B cell (primary cell): ENCODE measurements at regions of chr11 and their contacts with region 1.

Region 1: GRCh38 chr11:60913793-60914632 is at the start of gene TMEM109:
- DNase-seq: peak; percentile 95
- ATAC-seq: peak; percentile 56
- H3K4me3 ChIP-seq: peak within 1 kb of the TSS; percentile 61 to 100 (median 90)
- H3K4me3 Mint-ChIP-seq: peak within 1 kb of the TSS; percentile 97
- H3K27ac ChIP-seq: peak within 1 kb of the TSS; percentile 87 to 96
- H3K27ac Mint-ChIP-seq: peak within 1 kb of the TSS; percentile 98
- H3K4me1 ChIP-seq: peaks cover 68 to 87% of the 10 kb centered on the region in 2 donors
- H3K4me1 Mint-ChIP-seq: peaks cover 77% of the 10 kb centered on the region
- H3K27me3 ChIP-seq: no peaks in the 10 kb centered on the region
- H3K27me3 Mint-ChIP-seq: no peaks in the 10 kb centered on the region
- CTCF ChIP-seq: no peak
- total RNA-seq, gene TMEM109: 81.7 and 99.4 TPM in 2 replicates

Region 2: DNA sequence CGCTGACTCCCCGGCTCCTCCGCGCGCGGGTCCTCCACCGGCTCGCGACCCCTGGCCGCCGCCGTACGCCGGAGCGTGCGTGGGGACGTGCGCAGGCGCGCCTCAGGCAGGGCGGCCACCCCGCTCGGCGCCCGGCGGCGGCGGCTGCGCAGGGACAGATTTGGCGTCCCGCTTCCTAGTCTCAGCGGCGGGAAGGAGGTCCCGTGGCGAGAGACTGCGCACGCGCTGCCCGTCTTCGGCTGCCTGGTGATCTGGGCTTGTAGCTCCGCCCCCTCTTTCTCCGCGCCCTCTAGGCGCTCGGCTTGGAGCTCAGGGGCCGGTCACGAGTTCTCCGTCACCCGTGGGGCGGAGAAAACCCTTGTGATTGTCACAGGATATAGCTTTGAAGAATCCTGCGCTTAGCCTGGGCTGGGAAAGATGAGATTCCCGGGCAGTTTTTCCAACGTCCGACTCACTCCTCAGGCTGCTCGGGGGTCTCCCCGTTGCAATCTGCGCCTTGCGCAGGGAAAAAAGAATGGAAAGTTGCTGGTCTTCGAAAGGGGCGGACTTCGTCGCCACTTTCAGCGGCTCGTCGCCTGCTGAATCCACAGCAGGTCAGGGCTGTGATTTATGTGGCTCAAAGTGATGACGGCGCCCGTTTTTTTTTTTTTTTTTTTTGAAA is 1244.9 kb before region 1 on chr11 and contains the start of gene PATL1:
- CTCF ChIA-PET with region 1: no interaction called
- POLR2A ChIA-PET with region 1: no interaction called
- intact Hi-C with region 1: loop called (anchors 10 kb)
- DNase-seq: peak; percentile 100
- ATAC-seq: peak; percentile 89
- H3K4me3 ChIP-seq: peak within 1 kb of the TSS; percentile 81 to 96 (median 93)
- H3K4me3 Mint-ChIP-seq: peak within 1 kb of the TSS; percentile 98
- H3K27ac ChIP-seq: peak within 1 kb of the TSS; percentile 98 to 100
- H3K27ac Mint-ChIP-seq: peak within 1 kb of the TSS; percentile 100
- H3K4me1 ChIP-seq: peaks cover 20% of the 10 kb centered on the region in 2 donors
- H3K4me1 Mint-ChIP-seq: peaks cover 33% of the 10 kb centered on the region
- H3K27me3 ChIP-seq: no peaks in the 10 kb centered on the region
- H3K27me3 Mint-ChIP-seq: no peaks in the 10 kb centered on the region
- CTCF ChIP-seq: peak; percentile 0
- total RNA-seq, gene PATL1: 45.0 and 46.0 TPM in 2 replicates

Region 3: GRCh38 chr11:60841797-60842667 is 72.0 kb before region 1 on chr11 and contains the start of gene CCDC86:
- CTCF ChIA-PET with region 1: no interaction called
- POLR2A ChIA-PET with region 1: no interaction called
- intact Hi-C with region 1: loop called (anchors 1 kb)
- DNase-seq: peak; percentile 98
- ATAC-seq: peak; percentile 97
- H3K4me3 ChIP-seq: peak within 1 kb of the TSS; percentile 54 to 97 (median 88)
- H3K4me3 Mint-ChIP-seq: peak within 1 kb of the TSS; percentile 93
- H3K27ac ChIP-seq: peak within 1 kb of the TSS; percentile 49 to 81
- H3K27ac Mint-ChIP-seq: peak within 1 kb of the TSS; percentile 93
- H3K4me1 ChIP-seq: peaks cover 32 to 33% of the 10 kb centered on the region in 2 donors
- H3K4me1 Mint-ChIP-seq: peaks cover 48% of the 10 kb centered on the region
- H3K27me3 ChIP-seq: no peaks in the 10 kb centered on the region
- H3K27me3 Mint-ChIP-seq: no peaks in the 10 kb centered on the region
- CTCF ChIP-seq: no peak
- total RNA-seq, gene CCDC86: 9.5 and 10.5 TPM in 2 replicates

Region 4: GRCh38 chr11:60891103-60891741 is 22.8 kb before region 1 on chr11:
- CTCF ChIA-PET with region 1: no interaction called
- POLR2A ChIA-PET with region 1: no interaction called
- intact Hi-C with region 1: no loop called
- DNase-seq: no peak
- ATAC-seq: no peak
- H3K4me3 ChIP-seq: no peak overlapping the region
- H3K4me3 Mint-ChIP-seq: no peak overlapping the region
- H3K27ac ChIP-seq: no peak overlapping the region
- H3K27ac Mint-ChIP-seq: no peak overlapping the region
- H3K4me1 ChIP-seq: no peaks in the 10 kb centered on the region
- H3K4me1 Mint-ChIP-seq: no peaks in the 10 kb centered on the region
- H3K27me3 ChIP-seq: no peaks in the 10 kb centered on the region
- H3K27me3 Mint-ChIP-seq: no peaks in the 10 kb centered on the region
- CTCF ChIP-seq: no peak

Region 5: DNA sequence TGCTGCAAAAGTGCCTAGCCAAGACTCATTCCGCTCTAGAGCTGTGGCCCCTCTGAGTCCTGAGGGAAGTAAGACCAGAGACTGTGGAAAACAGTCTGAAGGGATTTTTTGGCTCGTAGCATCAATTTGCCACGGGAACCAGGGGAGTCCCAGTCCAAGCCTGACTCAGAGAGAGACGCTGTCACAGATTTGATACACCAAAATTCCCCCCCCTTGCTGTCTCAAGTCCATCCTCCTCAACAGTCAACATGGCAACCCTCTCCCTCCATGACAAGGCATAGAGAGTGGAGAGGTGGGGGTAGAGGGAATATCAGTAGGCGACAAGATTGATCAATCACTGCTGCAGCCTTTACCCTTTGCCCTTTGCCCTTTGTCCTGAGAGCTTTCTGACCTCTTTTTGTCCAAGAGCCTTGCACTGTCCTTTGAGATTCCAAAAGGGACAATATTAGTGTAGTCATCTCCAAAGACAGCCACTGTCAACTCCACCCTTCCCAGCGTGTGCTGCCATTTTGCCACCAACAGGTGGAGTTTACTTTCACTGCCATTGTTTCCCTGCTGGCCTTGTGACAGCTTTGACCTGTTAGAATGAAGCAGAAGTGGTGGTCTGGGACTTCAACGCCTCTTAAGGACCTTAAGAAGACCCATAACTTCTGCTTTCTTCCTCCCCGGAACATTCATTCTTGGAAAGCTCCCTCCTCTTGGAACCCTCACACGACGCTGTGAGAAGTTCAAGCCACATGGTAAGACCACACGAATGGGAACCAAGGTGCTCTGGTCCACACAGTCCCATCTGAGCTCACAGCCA is 30.7 kb after region 1 on chr11:
- CTCF ChIA-PET with region 1: interaction called, 12 read pairs
- POLR2A ChIA-PET with region 1: interaction called, 26 read pairs
- intact Hi-C with region 1: no loop called
- DNase-seq: peak; percentile 42
- ATAC-seq: peak; percentile 17
- H3K4me3 ChIP-seq: no peak overlapping the region
- H3K4me3 Mint-ChIP-seq: no peak overlapping the region
- H3K27ac ChIP-seq: no peak overlapping the region
- H3K27ac Mint-ChIP-seq: peak overlapping the region; percentile 47
- H3K4me1 ChIP-seq: peaks cover 30 to 40% of the 10 kb centered on the region in 2 donors
- H3K4me1 Mint-ChIP-seq: peaks cover 67% of the 10 kb centered on the region
- H3K27me3 ChIP-seq: no peaks in the 10 kb centered on the region
- H3K27me3 Mint-ChIP-seq: no peaks in the 10 kb centered on the region
- CTCF ChIP-seq: no peak

Region 6: GRCh38 chr11:61071208-61071681 is 157.2 kb after region 1 on chr11:
- CTCF ChIA-PET with region 1: interaction called, 14 read pairs
- POLR2A ChIA-PET with region 1: no interaction called
- intact Hi-C with region 1: loop called (anchors 2 kb)
- DNase-seq: peak; percentile 61
- ATAC-seq: peak; percentile 50
- H3K4me3 ChIP-seq: peak overlapping the region in 1 of 5 experiments; percentile 15
- H3K4me3 Mint-ChIP-seq: peak overlapping the region; percentile 68
- H3K27ac ChIP-seq: peak overlapping the region; percentile 91 to 98
- H3K27ac Mint-ChIP-seq: peak overlapping the region; percentile 97
- H3K4me1 ChIP-seq: peaks cover 40 to 49% of the 10 kb centered on the region in 2 donors
- H3K4me1 Mint-ChIP-seq: peaks cover 71% of the 10 kb centered on the region
- H3K27me3 ChIP-seq: no peaks in the 10 kb centered on the region
- H3K27me3 Mint-ChIP-seq: no peaks in the 10 kb centered on the region
- CTCF ChIP-seq: no peak

Region 7: GRCh38 chr11:61495801-61496597 is 582.0 kb after region 1 on chr11:
- CTCF ChIA-PET with region 1: no interaction called
- POLR2A ChIA-PET with region 1: no interaction called
- intact Hi-C with region 1: no loop called
- DNase-seq: no peak
- ATAC-seq: no peak
- H3K4me3 ChIP-seq: no peak overlapping the region
- H3K4me3 Mint-ChIP-seq: no peak overlapping the region
- H3K27ac ChIP-seq: no peak overlapping the region
- H3K27ac Mint-ChIP-seq: no peak overlapping the region
- H3K4me1 ChIP-seq: no peaks in the 10 kb centered on the region
- H3K4me1 Mint-ChIP-seq: no peaks in the 10 kb centered on the region
- H3K27me3 ChIP-seq: no peaks in the 10 kb centered on the region
- H3K27me3 Mint-ChIP-seq: peaks cover 4% of the 10 kb centered on the region
- CTCF ChIP-seq: no peak

Region 8: GRCh38 chr11:61792310-61793085 is 878.5 kb after region 1 on chr11 and contains the starts of genes FEN1 and TMEM258:
- CTCF ChIA-PET with region 1: no interaction called
- POLR2A ChIA-PET with region 1: no interaction called
- intact Hi-C with region 1: loop called (anchors 5 kb)
- DNase-seq: peak; percentile 96
- ATAC-seq: peak; percentile 91
- H3K4me3 ChIP-seq: peak within 1 kb of the TSS; percentile 80 to 94 (median 88)
- H3K4me3 Mint-ChIP-seq: peak within 1 kb of the TSS; percentile 93
- H3K27ac ChIP-seq: peak within 1 kb of the TSS; percentile 92 to 96
- H3K27ac Mint-ChIP-seq: peak within 1 kb of the TSS; percentile 97
- H3K4me1 ChIP-seq: peaks cover 11 to 23% of the 10 kb centered on the region in 2 donors
- H3K4me1 Mint-ChIP-seq: peaks cover 34% of the 10 kb centered on the region
- H3K27me3 ChIP-seq: no peaks in the 10 kb centered on the region
- H3K27me3 Mint-ChIP-seq: no peaks in the 10 kb centered on the region
- CTCF ChIP-seq: no peak
- total RNA-seq, gene FEN1: 9.2 and 9.8 TPM in 2 replicates
- total RNA-seq, gene TMEM258: 64.6 and 65.8 TPM in 2 replicates